Activated naive CD4-positive, alpha-beta T cell treated with anti-CD3 and anti-CD28 coated beads for 36 hours (primary cell): ENCODE measurements at regions of chr2 and their contacts with region 1.

Region 1: DNA sequence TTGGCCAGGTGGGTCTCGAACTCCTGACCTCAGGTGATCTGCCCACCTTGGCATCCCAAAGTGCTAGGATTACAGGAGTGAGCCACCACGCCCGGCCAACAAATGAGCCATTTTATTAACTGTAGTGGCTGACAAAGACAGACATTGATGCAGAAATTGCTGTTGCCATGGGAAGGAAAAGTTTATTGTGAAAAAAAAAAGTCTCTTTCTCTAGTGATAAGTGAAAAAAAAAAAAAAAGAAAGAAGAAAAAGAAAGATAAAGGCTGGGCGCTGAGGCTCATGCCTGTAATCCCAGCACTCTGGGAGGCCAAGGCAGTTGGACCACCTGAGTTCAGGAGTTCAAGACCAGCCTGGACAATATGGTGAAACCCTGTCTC is 39.8 kb upstream of the RAB1A start:
- DNase-seq: no peak
- H3K4me3 Mint-ChIP-seq: no peak overlapping the region
- H3K27ac Mint-ChIP-seq: no peak overlapping the region
- H3K4me1 Mint-ChIP-seq: no peaks in the 10 kb centered on the region
- H3K27me3 Mint-ChIP-seq: no peaks in the 10 kb centered on the region

Region 2: DNA sequence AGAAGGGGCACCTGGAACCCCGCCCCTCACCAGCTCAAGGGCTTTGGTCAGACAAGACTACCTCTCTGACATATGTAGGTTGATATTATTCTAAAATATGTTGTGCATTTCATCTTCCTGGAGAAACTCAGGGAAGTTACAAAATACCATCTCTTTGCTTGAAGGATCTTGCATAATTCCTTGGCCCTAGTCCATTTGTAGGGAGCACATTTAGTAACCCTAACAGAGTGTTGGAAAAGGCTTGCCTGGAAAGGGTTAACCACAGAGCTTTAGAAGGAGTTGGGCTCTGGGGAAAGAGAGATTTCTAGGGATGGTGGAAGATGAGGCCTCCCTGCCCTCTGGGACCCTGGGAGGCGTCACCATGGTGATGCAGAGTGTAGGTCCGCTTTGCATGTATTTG is 323.6 kb before region 1 on chr2:
- CTCF ChIA-PET with region 1: no interaction called
- intact Hi-C with region 1: no loop called
- DNase-seq: no peak
- H3K4me3 Mint-ChIP-seq: no peak overlapping the region
- H3K27ac Mint-ChIP-seq: no peak overlapping the region
- H3K4me1 Mint-ChIP-seq: no peaks in the 10 kb centered on the region
- H3K27me3 Mint-ChIP-seq: no peaks in the 10 kb centered on the region

Region 3: DNA sequence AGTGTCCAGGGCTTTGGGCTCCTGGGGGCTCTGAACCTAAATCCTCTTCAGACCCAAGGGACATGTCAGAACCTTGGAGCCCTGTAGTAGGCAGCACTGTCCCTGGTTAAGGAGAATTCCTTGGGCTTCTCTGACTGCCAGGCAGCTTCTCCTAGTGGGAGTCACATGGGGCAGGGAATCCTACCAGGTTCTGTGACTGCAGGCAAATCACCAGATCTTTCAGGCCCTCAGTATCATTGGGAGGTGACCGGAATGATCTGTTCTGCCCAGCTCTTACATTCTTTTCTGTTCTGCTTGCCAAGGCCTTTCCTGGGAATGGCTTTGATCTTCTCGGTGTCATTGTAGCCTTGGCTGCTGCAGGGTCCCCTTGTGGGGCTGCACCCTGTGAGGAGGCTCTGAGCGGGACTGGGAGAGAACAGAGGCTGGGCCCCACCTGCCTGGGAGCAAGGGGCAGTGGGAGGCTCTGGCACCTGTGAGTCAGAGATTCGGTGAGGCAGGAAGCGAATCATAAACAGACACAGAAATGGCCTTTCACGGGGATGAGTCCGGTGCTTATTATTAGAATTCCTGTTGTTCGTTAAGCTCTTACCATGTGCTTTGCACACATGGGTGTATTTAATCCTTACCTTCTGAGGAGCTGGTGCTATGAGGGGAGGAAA is 99.4 kb before region 1 on chr2:
- CTCF ChIA-PET with region 1: interaction called, 63 read pairs
- intact Hi-C with region 1: no loop called
- DNase-seq: no peak
- H3K4me3 Mint-ChIP-seq: no peak overlapping the region
- H3K27ac Mint-ChIP-seq: peak overlapping the region; percentile 91
- H3K4me1 Mint-ChIP-seq: peaks cover 31% of the 10 kb centered on the region
- H3K27me3 Mint-ChIP-seq: no peaks in the 10 kb centered on the region

Region 4: DNA sequence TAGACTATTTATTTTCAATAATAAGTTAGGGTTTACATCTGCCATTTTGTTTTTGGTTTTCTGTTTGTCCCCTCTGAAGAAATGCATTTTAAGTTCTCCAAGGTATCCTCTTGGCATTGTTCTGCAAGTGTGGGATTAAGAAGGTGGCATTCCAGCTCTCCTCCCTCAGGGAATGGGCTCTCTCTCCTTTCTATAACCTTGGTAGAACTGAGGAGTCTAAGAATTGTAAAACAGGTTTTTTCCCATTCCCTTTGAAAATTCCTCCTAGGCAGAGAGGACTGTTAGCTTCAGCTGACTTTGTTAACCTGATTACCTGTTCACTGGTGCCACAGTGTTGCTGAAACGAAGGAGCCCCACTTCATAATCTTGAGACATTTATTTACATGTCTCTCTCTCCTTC is 13.7 kb before region 1 on chr2:
- CTCF ChIA-PET with region 1: interaction called, 10 read pairs
- intact Hi-C with region 1: no loop called
- DNase-seq: no peak
- H3K4me3 Mint-ChIP-seq: no peak overlapping the region
- H3K27ac Mint-ChIP-seq: no peak overlapping the region
- H3K4me1 Mint-ChIP-seq: peaks cover 6% of the 10 kb centered on the region
- H3K27me3 Mint-ChIP-seq: no peaks in the 10 kb centered on the region

Region 5: GRCh38 chr2:65382776-65383357 is 213.1 kb after region 1 on chr2:
- CTCF ChIA-PET with region 1: no interaction called
- intact Hi-C with region 1: no loop called
- DNase-seq: peak; percentile 94
- H3K4me3 Mint-ChIP-seq: peak overlapping the region; percentile 23
- H3K27ac Mint-ChIP-seq: no peak overlapping the region
- H3K4me1 Mint-ChIP-seq: peaks cover 24% of the 10 kb centered on the region
- H3K27me3 Mint-ChIP-seq: no peaks in the 10 kb centered on the region